Activated T-helper 1 cell treated with anti-CD3 and anti-CD28 coated beads, Interleukin-12 subunit alpha, Interleukin-12 subunit beta, Interleukin-2, Interleukin-4 antibody, amounts not matched to agents 30 ng/mL and 10 ng/mL and 1 ng/mL, durations not matched to agents 14 hours and 24 hours and 36 hours (primary cell): ENCODE measurements at regions of chr12 and their contacts with region 1.

Region 1: GRCh38 chr12:14365294-14366208 is at the start of gene ATF7IP:
- DNase-seq: peak; percentile 96
- H3K4me3 Mint-ChIP-seq: peak within 1 kb of the TSS; percentile 85
- H3K27ac Mint-ChIP-seq: peak within 1 kb of the TSS; percentile 98
- H3K4me1 Mint-ChIP-seq: peaks cover 46% of the 10 kb centered on the region
- H3K27me3 Mint-ChIP-seq: no peaks in the 10 kb centered on the region
- total RNA-seq, gene ATF7IP: 66.4 and 71.6 TPM in 2 replicates

Region 2: GRCh38 chr12:14216405-14217294 is 148.9 kb before region 1 on chr12:
- intact Hi-C with region 1: loop called (anchors 1 kb)
- DNase-seq: no peak
- H3K4me3 Mint-ChIP-seq: peak overlapping the region; percentile 0
- H3K27ac Mint-ChIP-seq: no peak overlapping the region
- H3K4me1 Mint-ChIP-seq: peaks cover 15% of the 10 kb centered on the region
- H3K27me3 Mint-ChIP-seq: no peaks in the 10 kb centered on the region

Region 3: DNA sequence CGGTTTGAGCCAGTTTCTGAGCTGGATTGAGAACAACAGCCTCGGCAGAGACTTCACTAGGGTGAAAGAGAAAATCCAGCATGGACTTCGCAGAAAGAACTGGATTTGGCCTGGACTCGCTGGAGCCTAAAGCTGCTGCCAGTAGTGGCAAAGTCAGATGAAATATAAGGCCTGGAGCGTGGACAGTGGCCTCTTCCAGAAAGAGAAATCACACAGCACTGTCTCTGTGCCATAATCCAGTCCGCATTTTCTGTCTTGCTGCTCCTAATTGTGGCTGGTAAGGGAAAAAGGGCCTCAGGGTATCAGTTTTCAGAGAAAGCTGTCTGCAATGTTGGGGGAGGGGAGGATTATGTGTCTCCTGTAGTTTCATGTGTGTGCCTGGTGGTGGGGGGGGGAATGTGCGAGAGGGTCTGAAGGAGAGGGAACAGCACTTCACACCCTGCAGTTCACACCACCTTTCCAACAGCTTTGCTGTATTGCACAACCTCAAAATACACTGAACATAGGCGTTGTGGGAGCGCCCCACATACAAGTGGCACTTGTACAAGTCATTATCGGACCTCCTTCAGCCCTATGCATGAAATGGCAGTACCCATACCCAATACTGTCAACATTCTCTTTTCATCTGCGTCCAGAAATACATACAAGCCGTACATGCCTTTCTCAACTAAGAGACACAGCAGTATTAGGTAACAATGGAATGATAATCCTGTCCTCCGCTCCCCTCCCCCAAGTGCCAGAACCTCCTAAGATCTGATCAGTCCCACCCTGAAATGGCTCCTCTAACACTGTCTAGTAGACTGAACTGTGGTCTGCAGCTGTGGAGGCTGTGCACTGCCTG is 107.6 kb before region 1 on chr12:
- intact Hi-C with region 1: loop called (anchors 1 kb)
- DNase-seq: peak; percentile 87
- H3K4me3 Mint-ChIP-seq: peak overlapping the region; percentile 76
- H3K27ac Mint-ChIP-seq: peak overlapping the region; percentile 95
- H3K4me1 Mint-ChIP-seq: peaks cover 53% of the 10 kb centered on the region
- H3K27me3 Mint-ChIP-seq: no peaks in the 10 kb centered on the region

Region 4: GRCh38 chr12:14384783-14385638 is 19.5 kb after region 1 on chr12:
- intact Hi-C with region 1: loop called (anchors 1 kb)
- DNase-seq: peak; percentile 73
- H3K4me3 Mint-ChIP-seq: peak overlapping the region; percentile 86
- H3K27ac Mint-ChIP-seq: peak overlapping the region; percentile 97
- H3K4me1 Mint-ChIP-seq: peaks cover 58% of the 10 kb centered on the region
- H3K27me3 Mint-ChIP-seq: no peaks in the 10 kb centered on the region

Region 5: DNA sequence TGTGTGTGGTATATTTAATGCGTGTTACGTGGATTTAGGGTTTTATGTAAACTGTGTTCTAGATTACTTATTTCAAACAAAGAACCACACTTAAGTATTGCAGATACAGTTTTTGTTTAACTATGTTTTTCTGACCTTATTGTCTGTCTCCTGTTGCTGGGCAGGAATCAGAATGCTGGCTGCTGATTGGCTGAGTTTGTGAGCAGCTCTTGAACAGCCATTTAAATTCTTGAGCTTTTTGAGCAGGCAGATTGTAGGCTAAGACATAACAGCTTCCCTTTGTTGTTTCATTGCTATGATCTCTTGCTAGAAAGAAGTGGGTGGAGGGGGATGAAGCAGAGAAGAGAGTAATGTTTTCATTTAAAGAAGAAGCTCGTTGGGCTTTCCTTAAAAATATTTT is 52.2 kb after region 1 on chr12:
- intact Hi-C with region 1: loop called (anchors 1 kb)
- DNase-seq: peak; percentile 60
- H3K4me3 Mint-ChIP-seq: peak overlapping the region; percentile 75
- H3K27ac Mint-ChIP-seq: peak overlapping the region; percentile 88
- H3K4me1 Mint-ChIP-seq: peaks cover 56% of the 10 kb centered on the region
- H3K27me3 Mint-ChIP-seq: no peaks in the 10 kb centered on the region

Region 6: GRCh38 chr12:14479004-14479403 is 113.5 kb after region 1 on chr12:
- intact Hi-C with region 1: loop called (anchors 5 kb)
- DNase-seq: no peak
- H3K4me3 Mint-ChIP-seq: no peak overlapping the region
- H3K27ac Mint-ChIP-seq: no peak overlapping the region
- H3K4me1 Mint-ChIP-seq: peaks cover 6% of the 10 kb centered on the region
- H3K27me3 Mint-ChIP-seq: no peaks in the 10 kb centered on the region

Region 7: GRCh38 chr12:15575671-15576541 is 1210.4 kb after region 1 on chr12:
- intact Hi-C with region 1: loop called (anchors 5 kb)
- DNase-seq: no peak
- H3K4me3 Mint-ChIP-seq: peak overlapping the region; percentile 12
- H3K27ac Mint-ChIP-seq: peak overlapping the region; percentile 88
- H3K4me1 Mint-ChIP-seq: peaks cover 64% of the 10 kb centered on the region
- H3K27me3 Mint-ChIP-seq: no peaks in the 10 kb centered on the region